IMR-90 (cell line): ENCODE measurements at regions of chr18 and their contacts with region 1.

Region 1: DNA sequence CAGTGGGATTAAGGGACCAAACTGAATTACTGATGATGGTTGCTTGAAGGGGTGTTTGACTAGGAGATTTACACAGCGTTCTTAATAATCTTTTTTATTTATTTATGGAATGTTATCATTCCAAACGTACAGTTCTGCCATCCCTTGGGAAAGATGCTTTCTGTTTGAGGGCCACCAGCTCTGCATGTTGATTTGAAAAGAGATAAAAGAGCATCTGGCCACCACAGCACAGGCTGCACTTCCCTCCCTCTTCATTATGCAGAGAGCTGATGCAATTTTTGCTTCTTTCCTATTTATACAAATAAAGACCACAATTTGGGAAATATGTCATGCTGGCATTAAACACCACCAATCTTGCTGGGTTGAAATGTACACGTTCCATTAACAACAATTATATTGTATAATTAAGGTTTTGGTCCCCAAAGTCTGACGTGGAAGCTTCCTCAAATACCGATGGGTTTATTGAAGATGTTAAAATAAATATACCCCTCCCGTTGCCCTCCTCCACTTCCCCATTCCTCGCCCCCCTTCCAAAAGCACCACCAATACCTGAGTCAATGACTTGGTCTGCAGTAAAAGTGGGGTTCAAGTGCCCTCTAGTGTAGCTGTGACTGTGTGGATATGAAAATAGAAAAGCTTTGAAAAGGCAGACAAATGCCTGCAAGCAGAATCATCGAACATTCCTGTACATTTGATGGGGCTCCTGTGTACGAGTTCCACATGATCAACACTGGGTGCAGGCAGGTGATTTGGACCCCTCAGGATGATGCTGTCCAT is 211.9 kb downstream of the HRH4 start:
- DNase-seq: peak; percentile 39
- ATAC-seq: peak; percentile 75
- H3K4me3 ChIP-seq: no peak overlapping the region
- H3K27ac ChIP-seq: peak overlapping the region; percentile 80; the same call in 1 of the 2 replicates
- H3K4me1 ChIP-seq: peaks cover 14% of the 10 kb centered on the region
- H3K27me3 ChIP-seq: no peaks in the 10 kb centered on the region
- CTCF ChIP-seq: peak; percentile 51
- POLR2A ChIP-seq: no peak
- RAD21 ChIP-seq: peak; percentile 57

Region 2: GRCh38 chr18:24543805-24544498 is 128.4 kb before region 1 on chr18:
- CTCF ChIA-PET with region 1: interaction called, 3 read pairs
- POLR2A ChIA-PET with region 1: no interaction called
- dilution Hi-C with region 1: no loop called
- in situ Hi-C with region 1: no loop called
- intact Hi-C with region 1: loop called (anchors 2 kb)
- DNase-seq: peak; percentile 40
- ATAC-seq: peak; percentile 64
- H3K4me3 ChIP-seq: no peak overlapping the region
- H3K27ac ChIP-seq: no peak overlapping the region
- H3K4me1 ChIP-seq: no peaks in the 10 kb centered on the region
- H3K27me3 ChIP-seq: peaks cover 19% of the 10 kb centered on the region
- CTCF ChIP-seq: peak; percentile 62
- POLR2A ChIP-seq: no peak
- RAD21 ChIP-seq: peak; percentile 67

Region 3: DNA sequence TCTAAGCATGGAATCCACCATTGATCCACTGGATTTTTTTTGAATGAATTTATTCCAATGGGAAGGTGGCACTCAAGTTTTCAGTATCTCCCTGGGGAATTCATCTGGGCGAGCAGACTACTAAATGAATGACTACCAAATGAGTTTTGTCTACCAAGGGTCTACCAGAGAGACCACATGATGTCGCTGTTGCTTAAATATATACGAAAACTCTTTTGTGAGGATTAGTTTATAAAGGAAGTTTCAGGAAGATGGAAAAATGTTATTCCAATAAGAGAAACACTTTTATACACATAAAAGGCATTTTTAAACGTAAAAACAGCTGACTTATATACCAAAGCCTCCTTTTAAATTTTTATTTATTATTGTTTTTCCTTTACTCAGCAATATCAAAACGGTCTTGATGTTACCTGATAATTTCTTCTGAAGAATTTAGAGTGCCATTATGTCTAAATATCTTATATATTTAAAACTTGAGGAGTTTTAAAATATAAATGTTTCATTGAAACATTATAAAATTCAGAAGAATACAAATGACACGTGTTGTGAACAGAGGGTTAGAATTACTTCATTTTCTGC is 72.2 kb before region 1 on chr18:
- CTCF ChIA-PET with region 1: interaction called, 8 read pairs
- POLR2A ChIA-PET with region 1: no interaction called
- dilution Hi-C with region 1: no loop called
- in situ Hi-C with region 1: no loop called
- intact Hi-C with region 1: loop called (anchors 1 kb)
- DNase-seq: peak; percentile 75
- ATAC-seq: peak; percentile 79
- H3K4me3 ChIP-seq: no peak overlapping the region
- H3K27ac ChIP-seq: no peak overlapping the region
- H3K4me1 ChIP-seq: peaks cover 2% of the 10 kb centered on the region; the same call in 1 of the 2 replicates
- H3K27me3 ChIP-seq: peaks cover 24% of the 10 kb centered on the region
- CTCF ChIP-seq: peak; percentile 83
- POLR2A ChIP-seq: no peak
- RAD21 ChIP-seq: peak; percentile 83

Region 4: GRCh38 chr18:24704946-24705630 is 32.7 kb after region 1 on chr18:
- CTCF ChIA-PET with region 1: no interaction called
- POLR2A ChIA-PET with region 1: no interaction called
- dilution Hi-C with region 1: no loop called
- in situ Hi-C with region 1: no loop called
- intact Hi-C with region 1: loop called (anchors 2 kb)
- DNase-seq: peak; percentile 94
- ATAC-seq: peak; percentile 97
- H3K4me3 ChIP-seq: no peak overlapping the region
- H3K27ac ChIP-seq: peak overlapping the region; percentile 81
- H3K4me1 ChIP-seq: peaks cover 7% of the 10 kb centered on the region
- H3K27me3 ChIP-seq: no peaks in the 10 kb centered on the region
- CTCF ChIP-seq: no peak
- POLR2A ChIP-seq: no peak
- RAD21 ChIP-seq: no peak

Region 5: DNA sequence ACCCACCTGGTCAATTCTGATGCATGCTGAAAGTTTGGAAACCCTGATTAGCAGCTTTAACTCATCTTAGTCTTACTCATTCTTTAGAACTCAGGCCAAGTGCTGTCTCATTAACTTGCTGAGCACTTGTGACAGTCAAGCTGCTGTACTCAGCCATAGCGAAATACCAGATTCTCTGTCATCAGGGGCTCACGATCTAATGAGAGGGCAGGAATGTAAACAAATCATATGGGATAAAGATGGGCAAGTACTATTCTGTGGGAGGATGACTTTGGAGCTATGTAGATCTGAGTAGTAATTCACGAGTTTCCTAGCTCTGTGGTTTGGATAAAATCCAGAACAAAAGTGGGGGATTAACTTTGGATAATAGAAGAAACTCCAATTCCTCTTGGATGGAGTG is 164.7 kb after region 1 on chr18:
- CTCF ChIA-PET with region 1: no interaction called
- POLR2A ChIA-PET with region 1: no interaction called
- dilution Hi-C with region 1: no loop called
- in situ Hi-C with region 1: no loop called
- intact Hi-C with region 1: no loop called
- DNase-seq: peak; percentile 98
- ATAC-seq: peak; percentile 90
- H3K4me3 ChIP-seq: no peak overlapping the region
- H3K27ac ChIP-seq: peak overlapping the region; percentile 60; the same call in 1 of the 2 replicates
- H3K4me1 ChIP-seq: peaks cover 15% of the 10 kb centered on the region
- H3K27me3 ChIP-seq: peaks cover 3% of the 10 kb centered on the region; the same call in 1 of the 2 replicates
- CTCF ChIP-seq: no peak
- POLR2A ChIP-seq: no peak
- RAD21 ChIP-seq: no peak

Region 6: DNA sequence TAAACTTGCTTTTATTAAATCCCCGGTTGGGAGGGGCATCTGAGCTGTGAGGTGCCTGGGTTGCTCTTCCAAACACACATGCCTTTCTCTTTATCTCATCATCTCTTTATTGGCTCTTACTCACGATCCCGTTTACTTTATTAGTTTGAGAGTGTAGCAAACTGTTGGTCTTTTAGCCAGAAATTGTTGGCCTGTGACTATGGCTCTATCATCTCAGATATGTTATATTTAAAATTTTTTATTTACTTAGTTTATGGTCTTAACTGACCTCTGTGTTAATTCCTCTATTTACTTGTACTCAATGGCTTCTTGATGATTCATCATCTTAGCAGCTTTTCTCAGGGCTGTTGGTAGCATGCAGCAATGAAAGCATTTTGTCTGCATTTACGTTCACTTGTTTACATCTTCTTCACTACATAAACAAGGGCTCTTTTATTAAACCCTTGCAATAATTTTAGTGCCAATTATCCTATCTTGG is 196.4 kb after region 1 on chr18:
- CTCF ChIA-PET with region 1: no interaction called
- POLR2A ChIA-PET with region 1: no interaction called
- dilution Hi-C with region 1: no loop called
- in situ Hi-C with region 1: no loop called
- intact Hi-C with region 1: loop called (anchors 10 kb)
- DNase-seq: peak; percentile 85
- ATAC-seq: peak; percentile 93
- H3K4me3 ChIP-seq: no peak overlapping the region
- H3K27ac ChIP-seq: peak overlapping the region; percentile 44; the same call in 1 of the 2 replicates
- H3K4me1 ChIP-seq: peaks cover 5% of the 10 kb centered on the region
- H3K27me3 ChIP-seq: no peaks in the 10 kb centered on the region
- CTCF ChIP-seq: no peak
- POLR2A ChIP-seq: no peak
- RAD21 ChIP-seq: no peak

Region 7: DNA sequence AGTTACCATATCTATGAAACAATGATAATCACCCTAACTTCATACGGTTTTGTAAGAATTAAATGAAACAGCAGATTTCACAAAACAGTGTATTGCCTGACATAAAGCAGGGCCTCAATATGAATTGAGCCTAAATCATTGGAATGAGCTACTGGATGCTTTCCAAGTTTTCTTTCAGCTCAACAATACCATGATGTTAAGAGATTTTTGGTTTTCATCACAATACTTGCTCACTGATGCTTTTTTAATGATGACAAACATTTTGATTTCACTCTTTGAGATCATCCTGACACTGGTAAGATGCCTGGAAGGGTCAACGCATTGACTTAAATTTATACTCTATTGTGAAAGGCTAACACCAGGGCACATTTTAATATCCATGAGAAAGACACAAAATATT is 302.1 kb after region 1 on chr18:
- CTCF ChIA-PET with region 1: no interaction called
- POLR2A ChIA-PET with region 1: no interaction called
- dilution Hi-C with region 1: no loop called
- in situ Hi-C with region 1: no loop called
- intact Hi-C with region 1: no loop called
- DNase-seq: no peak
- ATAC-seq: no peak
- H3K4me3 ChIP-seq: no peak overlapping the region
- H3K27ac ChIP-seq: no peak overlapping the region
- H3K4me1 ChIP-seq: no peaks in the 10 kb centered on the region
- H3K27me3 ChIP-seq: peaks cover 4% of the 10 kb centered on the region; the same call in 1 of the 2 replicates
- CTCF ChIP-seq: no peak
- POLR2A ChIP-seq: no peak
- RAD21 ChIP-seq: no peak